GM10248 (cell line): ENCODE measurements at regions of chr3 and their contacts with region 1.

Region 1: GRCh38 chr3:194632809-194633348 is 340 bp downstream of the TMEM44 start:
- DNase-seq: no peak
- CTCF ChIP-seq: no peak

Region 2: GRCh38 chr3:194654443-194654842 is 21.6 kb after region 1 on chr3:
- CTCF ChIA-PET with region 1: interaction called, 10 read pairs
- POLR2A ChIA-PET with region 1: no interaction called
- DNase-seq: peak; percentile 53
- CTCF ChIP-seq: no peak